ENCODE measurements at regions of chr16 and their contacts with region 1.

Region 1: GRCh38 chr16:75789237-75789636 is 62.9 kb upstream of the CPHXL start:
- DNase-seq: no peak
- ATAC-seq: no peak
- H3K4me3 ChIP-seq: no peak overlapping the region
- H3K27ac ChIP-seq: no peak overlapping the region
- H3K4me1 ChIP-seq: no peaks in the 10 kb centered on the region
- H3K27me3 ChIP-seq: no peaks in the 10 kb centered on the region

Region 2: DNA sequence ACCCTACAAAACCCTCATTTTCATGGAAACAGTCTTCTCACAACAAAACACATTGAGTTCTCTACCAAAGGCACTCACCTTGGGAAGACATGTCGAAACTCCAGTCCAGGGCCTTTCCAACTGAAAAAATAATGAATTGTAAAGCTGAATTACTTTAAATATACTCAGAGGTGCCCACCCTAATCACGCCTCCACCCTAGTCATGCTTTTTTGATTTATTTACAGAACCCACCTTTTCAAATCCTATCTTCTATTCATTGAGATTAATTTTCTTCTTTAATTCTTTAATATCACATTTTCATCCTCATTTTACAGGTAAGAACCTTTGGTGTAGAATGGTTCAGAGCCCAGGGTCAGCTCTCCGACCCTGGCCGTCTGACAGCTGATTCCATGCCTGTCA is 112.3 kb before region 1 on chr16 and contains the start of gene CPHXL2:
- intact Hi-C with region 1: no loop called
- DNase-seq: no peak
- ATAC-seq: no peak
- H3K4me3 ChIP-seq: no peak within 1 kb of the TSS
- H3K27ac ChIP-seq: no peak within 1 kb of the TSS
- H3K4me1 ChIP-seq: no peaks in the 10 kb centered on the region
- H3K27me3 ChIP-seq: no peaks in the 10 kb centered on the region
- total RNA-seq, gene CPHXL2: not detected

Region 3: GRCh38 chr16:77171745-77172635 is 1382.8 kb after region 1 on chr16:
- intact Hi-C with region 1: loop called (anchors 5 kb)
- DNase-seq: no peak
- ATAC-seq: peak; percentile 76
- H3K4me3 ChIP-seq: no peak overlapping the region
- H3K27ac ChIP-seq: no peak overlapping the region
- H3K4me1 ChIP-seq: no peaks in the 10 kb centered on the region
- H3K27me3 ChIP-seq: no peaks in the 10 kb centered on the region